ENCODE measurements at regions of chr5 and their contacts with region 1.

Region 1: DNA sequence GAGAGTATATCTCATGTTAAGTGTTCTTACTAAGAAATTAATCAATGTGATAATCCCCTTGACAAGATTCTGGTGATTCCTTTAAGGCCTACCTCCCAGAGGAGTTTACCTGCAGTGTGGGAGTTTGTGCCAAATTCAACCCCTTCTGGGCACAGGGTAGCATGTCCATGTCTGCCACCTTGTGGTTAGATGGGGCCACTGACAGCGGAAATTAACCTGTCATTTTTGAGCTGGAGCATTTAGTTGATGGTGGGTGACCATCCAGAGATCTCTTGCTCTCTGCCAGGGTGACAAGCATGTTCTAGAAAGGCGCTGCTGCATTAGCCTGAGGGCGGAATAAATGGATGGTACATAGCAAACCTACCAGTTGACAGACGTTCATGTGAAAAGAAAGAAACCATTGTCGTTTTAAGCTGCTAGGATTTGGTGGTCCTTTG is 132.2 kb downstream of the FBXO4 start:
- DNase-seq: peak; percentile 72
- ATAC-seq: peak; percentile 97
- H3K4me3 Mint-ChIP-seq: no peak overlapping the region
- H3K27ac Mint-ChIP-seq: no peak overlapping the region
- H3K4me1 Mint-ChIP-seq: peaks cover 3% of the 10 kb centered on the region; the same call in 1 of the 2 replicates
- H3K27me3 Mint-ChIP-seq: no peaks in the 10 kb centered on the region
- CTCF ChIP-seq: peak; percentile 64; the same call in 1 of the 2 replicates

Region 2: DNA sequence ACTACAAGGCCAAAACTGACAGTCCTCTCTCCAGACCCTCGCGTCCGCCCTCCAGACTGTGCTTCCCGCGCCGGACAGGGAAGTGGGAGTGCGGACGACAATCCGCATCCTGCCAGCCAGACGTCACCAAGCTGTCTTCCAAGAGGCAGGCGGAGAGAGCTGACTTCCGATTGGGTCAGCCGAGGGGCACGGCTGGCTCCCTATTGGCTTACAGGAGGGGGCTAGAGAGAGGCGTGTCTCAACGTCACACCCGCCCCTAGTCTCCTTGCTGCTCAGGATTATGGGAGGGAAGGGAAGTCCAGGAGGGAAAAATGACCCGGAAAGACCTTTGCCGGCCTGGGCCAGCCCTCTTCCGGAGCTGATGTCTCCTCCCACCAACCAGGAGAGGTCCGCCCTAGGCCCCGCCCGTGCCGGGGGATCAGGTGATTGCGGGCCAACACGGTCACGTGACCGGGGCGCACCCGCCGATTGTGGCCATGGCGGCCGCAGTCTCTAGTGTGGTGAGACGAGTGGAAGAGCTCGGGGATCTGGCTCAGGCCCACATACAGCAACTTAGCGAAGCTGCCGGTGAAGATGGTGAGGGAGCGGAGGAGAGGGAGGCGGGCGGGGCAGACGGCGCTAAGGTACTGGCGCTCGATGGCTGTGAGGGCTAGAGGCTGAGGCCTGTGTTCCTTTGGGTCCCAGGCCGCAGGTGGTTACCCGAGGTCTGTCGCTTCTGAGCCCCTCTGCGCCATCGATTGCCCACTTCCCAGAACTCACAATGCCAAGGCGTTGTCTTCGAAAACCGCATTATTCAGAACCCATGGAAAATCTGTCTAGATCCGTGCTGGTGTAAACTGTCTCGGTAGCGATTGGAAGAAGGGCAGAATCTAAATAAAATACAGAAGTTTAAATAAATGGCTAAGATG is 153.1 kb before region 1 on chr5 and contains the start of gene RIMOC1:
- CTCF ChIA-PET with region 1: interaction called, 12 read pairs
- POLR2A ChIA-PET with region 1: no interaction called
- DNase-seq: peak; percentile 98
- ATAC-seq: peak; percentile 99
- H3K4me3 Mint-ChIP-seq: peak within 1 kb of the TSS; percentile 99
- H3K27ac Mint-ChIP-seq: peak within 1 kb of the TSS; percentile 99
- H3K4me1 Mint-ChIP-seq: peaks cover 17% of the 10 kb centered on the region
- H3K27me3 Mint-ChIP-seq: peaks cover 7% of the 10 kb centered on the region
- CTCF ChIP-seq: no peak
- total RNA-seq, gene RIMOC1: 27.1 to 30.5 TPM (median 28.8 TPM) in 3 replicates

Region 3: DNA sequence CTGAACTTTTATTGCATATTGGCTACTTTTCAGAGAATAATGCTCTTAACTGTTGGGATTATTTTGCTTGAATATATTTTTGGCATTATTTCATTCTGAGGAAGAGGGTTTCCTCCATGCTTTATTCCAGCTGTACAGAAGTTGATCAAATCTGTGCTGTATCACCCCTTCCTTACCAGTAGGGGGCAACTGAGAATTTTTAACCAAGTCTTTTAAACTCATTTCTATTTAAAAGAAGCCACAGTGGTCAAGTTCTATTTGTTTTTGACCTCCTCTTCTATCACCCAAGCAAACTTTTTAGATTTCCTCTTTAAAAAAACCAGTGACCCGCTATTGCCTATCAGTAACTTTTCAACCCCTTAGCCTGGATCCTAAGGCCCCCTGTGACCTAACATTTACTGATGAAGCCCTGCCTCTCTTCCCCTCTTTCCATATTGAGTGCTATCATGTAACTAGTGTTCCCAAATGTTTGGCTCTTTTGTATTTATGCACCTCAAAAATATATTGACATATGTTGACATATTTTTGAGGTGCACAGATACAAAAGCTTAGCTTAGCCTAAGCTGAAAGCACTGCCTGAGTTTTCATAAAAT is 51.6 kb before region 1 on chr5:
- CTCF ChIA-PET with region 1: interaction called, 19 read pairs
- POLR2A ChIA-PET with region 1: no interaction called
- DNase-seq: no peak
- ATAC-seq: peak; percentile 47
- H3K4me3 Mint-ChIP-seq: no peak overlapping the region
- H3K27ac Mint-ChIP-seq: no peak overlapping the region
- H3K4me1 Mint-ChIP-seq: no peaks in the 10 kb centered on the region
- H3K27me3 Mint-ChIP-seq: no peaks in the 10 kb centered on the region
- CTCF ChIP-seq: peak; percentile 74

Region 4: GRCh38 chr5:42043400-42043799 is 13.9 kb before region 1 on chr5:
- CTCF ChIA-PET with region 1: interaction called, 12 read pairs
- POLR2A ChIA-PET with region 1: no interaction called
- DNase-seq: no peak
- ATAC-seq: no peak
- H3K4me3 Mint-ChIP-seq: no peak overlapping the region
- H3K27ac Mint-ChIP-seq: no peak overlapping the region
- H3K4me1 Mint-ChIP-seq: peaks cover 7% of the 10 kb centered on the region; the same call in 1 of the 2 replicates
- H3K27me3 Mint-ChIP-seq: no peaks in the 10 kb centered on the region
- CTCF ChIP-seq: no peak

Region 5: DNA sequence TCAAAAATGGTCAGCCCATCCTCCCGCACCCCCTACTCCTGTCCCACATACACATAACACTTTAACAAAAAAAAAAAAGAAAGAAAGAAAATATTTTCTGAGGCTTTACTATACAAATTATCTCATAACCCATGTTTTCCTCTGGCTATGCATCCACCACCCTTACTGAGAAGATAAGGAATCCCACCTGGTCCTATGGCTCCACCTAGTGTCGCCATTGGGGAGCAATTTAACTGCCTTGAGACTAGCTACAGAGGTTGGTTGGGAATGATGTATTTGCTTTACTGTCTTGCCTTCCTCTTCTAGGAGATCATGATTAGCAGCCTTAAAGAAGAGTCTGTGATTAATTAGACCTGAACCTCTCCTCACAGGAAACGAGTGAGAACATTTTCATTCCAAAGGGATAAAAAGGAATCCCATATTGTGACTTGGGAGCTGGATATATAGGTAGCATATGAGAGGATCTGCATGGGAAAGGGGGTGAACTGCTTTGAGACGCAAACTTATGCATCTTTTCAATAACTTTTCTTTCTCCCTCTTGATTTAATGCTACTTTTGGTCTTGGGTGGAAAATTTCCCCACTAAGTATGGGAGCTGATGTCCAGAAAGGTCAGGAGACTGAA is 832.1 kb after region 1 on chr5:
- CTCF ChIA-PET with region 1: interaction called, 12 read pairs
- POLR2A ChIA-PET with region 1: no interaction called
- DNase-seq: peak; percentile 77
- ATAC-seq: peak; percentile 75
- H3K4me3 Mint-ChIP-seq: no peak overlapping the region
- H3K27ac Mint-ChIP-seq: no peak overlapping the region
- H3K4me1 Mint-ChIP-seq: peaks cover 1% of the 10 kb centered on the region; the same call in 1 of the 2 replicates
- H3K27me3 Mint-ChIP-seq: peaks cover 4% of the 10 kb centered on the region; the same call in 1 of the 2 replicates
- CTCF ChIP-seq: peak; percentile 77